Ascending aorta (tissue), 2 donors: ENCODE measurements at regions of chr19 and their contacts with region 1.

Region 1: GRCh38 chr19:38647368-38647965 is at the start of gene ACTN4:
- DNase-seq: peak; percentile 93 to 99
- H3K4me3 ChIP-seq: peak within 1 kb of the TSS; percentile 89 to 100
- H3K27ac ChIP-seq: peak within 1 kb of the TSS; percentile 92 to 96
- H3K4me1 ChIP-seq: peaks cover 10 to 22% of the 10 kb centered on the region in 2 donors
- H3K27me3 ChIP-seq: no peaks in the 10 kb centered on the region
- CTCF ChIP-seq: no peak
- total RNA-seq, gene ACTN4: 1,036 TPM

Region 2: GRCh38 chr19:38250821-38251563 is 396.5 kb before region 1 on chr19:
- intact Hi-C with region 1: loop called (anchors 5 kb)
- DNase-seq: peak; percentile 43 to 91
- H3K4me3 ChIP-seq: peak overlapping the region; percentile 89 to 90
- H3K27ac ChIP-seq: peak overlapping the region; percentile 90 to 99
- H3K4me1 ChIP-seq: peaks cover 29 to 63% of the 10 kb centered on the region in 2 donors
- H3K27me3 ChIP-seq: no peaks in the 10 kb centered on the region
- CTCF ChIP-seq: no peak

Region 3: GRCh38 chr19:38618590-38619360 is 28.7 kb before region 1 on chr19 and contains the start of gene EIF3K:
- intact Hi-C with region 1: loop called (anchors 2 kb)
- DNase-seq: peak; percentile 97 to 99
- H3K4me3 ChIP-seq: peak within 1 kb of the TSS; percentile 75 to 91
- H3K27ac ChIP-seq: peak within 1 kb of the TSS; percentile 87 to 88
- H3K4me1 ChIP-seq: peaks cover 9 to 10% of the 10 kb centered on the region in 2 donors
- H3K27me3 ChIP-seq: no peaks in the 10 kb centered on the region
- CTCF ChIP-seq: no peak
- total RNA-seq, gene EIF3K: 696 TPM

Region 4: DNA sequence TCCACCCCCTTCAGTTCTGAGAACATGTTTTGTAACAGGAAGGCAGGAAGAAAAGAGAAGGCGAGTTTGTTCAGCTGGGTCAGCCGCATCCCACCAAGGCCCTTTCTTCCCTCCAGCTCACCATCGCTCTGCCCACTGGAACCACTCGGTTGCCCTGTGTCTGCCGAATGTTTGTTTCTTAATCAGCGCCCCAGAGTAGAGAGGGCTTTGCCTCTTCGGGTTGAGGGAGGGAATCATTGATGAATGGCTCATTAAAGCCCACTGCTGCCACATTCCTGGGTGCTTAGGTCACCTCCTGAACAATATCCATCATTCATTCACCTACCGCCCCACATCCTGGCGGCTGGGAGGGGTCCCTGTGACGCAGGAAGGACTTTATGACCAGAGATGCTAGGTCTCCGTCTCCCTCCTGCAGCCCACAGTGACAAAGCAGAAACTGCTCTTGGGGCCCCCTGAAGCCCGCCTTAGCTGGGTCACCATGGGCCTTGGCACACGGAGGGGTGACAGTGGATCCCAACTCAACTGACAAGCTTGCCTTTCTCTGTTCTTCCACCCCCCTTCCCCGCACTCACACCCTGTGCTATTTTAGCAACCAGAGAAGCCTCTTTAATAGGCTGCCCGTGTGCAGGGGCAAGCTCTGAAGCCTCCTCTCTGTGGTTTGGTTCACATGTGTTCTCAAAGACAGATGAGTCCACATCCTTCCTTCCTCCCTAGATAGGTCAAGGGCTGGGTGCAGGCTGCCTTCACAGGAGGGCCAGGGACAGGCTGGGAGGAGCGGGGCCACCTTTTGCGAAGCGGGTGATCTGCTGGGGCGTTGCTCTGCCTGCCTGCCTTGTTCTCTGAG is 46.1 kb after region 1 on chr19:
- intact Hi-C with region 1: loop called (anchors 1 kb)
- DNase-seq: peak in 1 of 2 donors; percentile 84
- H3K4me3 ChIP-seq: peak overlapping the region in 1 of 2 donors; percentile 29
- H3K27ac ChIP-seq: peak overlapping the region; percentile 95 to 98
- H3K4me1 ChIP-seq: peaks cover 52 to 85% of the 10 kb centered on the region in 2 donors
- H3K27me3 ChIP-seq: no peaks in the 10 kb centered on the region
- CTCF ChIP-seq: no peak

Region 5: GRCh38 chr19:38711726-38712153 is 64.3 kb after region 1 on chr19:
- intact Hi-C with region 1: loop called (anchors 5 kb)
- DNase-seq: no peak
- H3K4me3 ChIP-seq: peak overlapping the region in 1 of 2 donors; percentile 1
- H3K27ac ChIP-seq: peak overlapping the region; percentile 79
- H3K4me1 ChIP-seq: peaks cover 50 to 80% of the 10 kb centered on the region in 2 donors
- H3K27me3 ChIP-seq: no peaks in the 10 kb centered on the region
- CTCF ChIP-seq: peak in 2 of 3 experiments; percentile 19 to 27

Region 6: GRCh38 chr19:38729653-38730469 is 82.4 kb after region 1 on chr19:
- intact Hi-C with region 1: loop called (anchors 2 kb)
- DNase-seq: no peak
- H3K4me3 ChIP-seq: no peak overlapping the region
- H3K27ac ChIP-seq: peak overlapping the region in 1 of 2 donors; percentile 46
- H3K4me1 ChIP-seq: peaks cover 0 to 11% of the 10 kb centered on the region in 2 donors
- H3K27me3 ChIP-seq: no peaks in the 10 kb centered on the region
- CTCF ChIP-seq: peak; percentile 71 to 78 (median 74)

Region 7: DNA sequence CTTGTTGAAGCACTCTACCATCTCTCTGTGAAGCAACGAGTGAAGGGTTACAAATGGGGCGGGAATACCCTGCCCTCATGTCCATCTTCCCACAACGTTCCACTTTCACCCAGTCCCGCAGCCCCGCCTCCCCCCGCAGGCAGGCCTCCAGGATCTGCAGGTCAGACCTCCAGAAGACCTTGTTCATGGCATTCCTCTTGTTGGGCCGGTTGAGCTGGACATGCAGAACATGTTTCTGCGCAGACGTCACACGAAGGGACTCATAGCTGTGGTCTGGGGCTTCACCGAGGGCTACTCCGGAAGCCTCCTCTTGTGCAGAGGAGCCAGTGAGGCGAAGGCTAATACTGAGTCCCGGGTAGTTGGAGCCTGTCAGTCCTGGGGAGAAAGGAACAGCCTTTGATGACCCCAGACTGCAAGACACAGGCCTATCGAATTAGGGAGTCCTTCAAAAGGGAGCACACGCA is 183.7 kb after region 1 on chr19:
- intact Hi-C with region 1: loop called (anchors 1 kb)
- DNase-seq: peak; percentile 45 to 89
- H3K4me3 ChIP-seq: peak overlapping the region; percentile 71 to 77
- H3K27ac ChIP-seq: peak overlapping the region; percentile 82 to 91
- H3K4me1 ChIP-seq: peaks cover 6 to 25% of the 10 kb centered on the region in 2 donors
- H3K27me3 ChIP-seq: no peaks in the 10 kb centered on the region
- CTCF ChIP-seq: no peak